ENCODE measurements at regions of chr16 and their contacts with region 1.

Region 1: GRCh38 chr16:83956336-83957289 is 3.6 kb downstream of the OSGIN1 start:
- DNase-seq: peak; percentile 76 to 91
- H3K4me3 ChIP-seq: no peak overlapping the region
- H3K4me1 ChIP-seq: peaks cover 18% of the 10 kb centered on the region
- H3K27me3 ChIP-seq: no peaks in the 10 kb centered on the region

Region 2: GRCh38 chr16:84040823-84041820 is 84.5 kb after region 1 on chr16:
- in situ Hi-C with region 1: no loop called
- DNase-seq: peak in 1 of 2 experiments; percentile 28
- H3K4me3 ChIP-seq: no peak overlapping the region
- H3K4me1 ChIP-seq: no peaks in the 10 kb centered on the region
- H3K27me3 ChIP-seq: 0 out of 2 replicates have a peak, but pooled peaks cover 3% of the 10 kb centered on the region

Region 3: GRCh38 chr16:84062734-84063640 is 106.4 kb after region 1 on chr16:
- in situ Hi-C with region 1: loop called (anchors 5 kb)
- DNase-seq: peak; percentile 41 to 90
- H3K4me3 ChIP-seq: no peak overlapping the region
- H3K4me1 ChIP-seq: no peaks in the 10 kb centered on the region
- H3K27me3 ChIP-seq: no peaks in the 10 kb centered on the region

Region 4: DNA sequence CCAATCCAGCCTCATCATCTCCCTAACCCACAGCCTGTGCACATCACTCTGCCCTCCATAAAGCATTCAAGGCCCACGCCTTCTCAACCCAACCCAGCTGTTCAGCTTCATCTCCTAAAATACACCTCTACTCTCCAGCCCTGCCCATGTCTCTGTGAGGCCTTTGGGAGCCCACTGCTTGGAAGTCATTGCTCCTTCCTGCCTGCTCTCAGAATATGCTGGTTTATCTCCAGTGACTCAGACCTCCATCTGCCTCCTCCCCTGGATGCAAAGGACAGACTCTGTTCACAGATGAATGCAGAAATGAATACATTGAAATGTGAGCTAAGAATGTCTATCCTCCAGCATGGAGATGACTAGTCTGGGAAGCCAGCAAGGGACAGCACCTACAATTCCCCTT is 264.2 kb after region 1 on chr16:
- in situ Hi-C with region 1: no loop called
- DNase-seq: no peak
- H3K4me3 ChIP-seq: no peak overlapping the region
- H3K4me1 ChIP-seq: no peaks in the 10 kb centered on the region
- H3K27me3 ChIP-seq: no peaks in the 10 kb centered on the region

Measured in HAP-1 (cell line).